Activated B cell treated with CpG ODN at 0.5 μM for 24 hours (primary cell): ENCODE measurements at regions of chr15 and their contacts with region 1.

Region 1: GRCh38 chr15:65184868-65185738 is at the start of gene CLPX:
- DNase-seq: peak; percentile 87
- ATAC-seq: peak; percentile 88
- H3K4me3 Mint-ChIP-seq: peak within 1 kb of the TSS; percentile 93
- H3K27ac Mint-ChIP-seq: peak within 1 kb of the TSS; percentile 89
- H3K4me1 Mint-ChIP-seq: peaks cover 26% of the 10 kb centered on the region
- H3K27me3 Mint-ChIP-seq: no peaks in the 10 kb centered on the region
- CTCF ChIP-seq: no peak
- total RNA-seq, gene CLPX: 52.2 and 53.5 TPM in 2 replicates

Region 2: DNA sequence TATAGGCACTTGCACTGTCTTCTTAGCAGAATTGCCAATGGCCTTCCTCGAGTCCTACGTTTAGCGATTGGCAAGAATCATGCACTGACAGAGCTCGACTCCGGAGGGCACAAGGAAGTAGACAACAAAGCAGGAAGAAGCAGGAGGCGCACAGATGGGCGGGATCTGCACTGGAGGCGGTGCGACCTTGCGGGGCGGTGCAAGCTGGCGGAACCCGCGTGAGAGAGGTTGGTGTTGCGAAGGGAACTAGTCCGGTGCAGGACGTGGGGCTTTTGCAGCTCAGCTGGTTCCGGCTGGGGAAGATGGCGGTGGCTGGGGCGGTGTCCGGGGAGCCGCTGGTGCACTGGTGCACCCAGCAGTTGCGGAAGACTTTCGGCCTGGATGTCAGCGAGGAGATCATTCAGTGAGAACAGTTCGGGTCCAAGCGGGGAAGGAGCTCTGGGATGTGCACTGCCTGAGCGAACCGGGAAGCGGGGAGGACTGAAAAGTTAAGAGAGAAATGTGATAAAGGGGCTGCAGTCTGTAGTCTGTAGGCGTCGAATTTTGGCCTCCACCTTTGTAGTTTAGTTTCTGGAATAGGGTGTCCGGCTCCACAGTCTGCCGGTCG is 797.4 kb before region 1 on chr15 and contains the start of gene TRIP4:
- CTCF ChIA-PET with region 1: no interaction called
- POLR2A ChIA-PET with region 1: interaction called, 8 read pairs
- intact Hi-C with region 1: loop called (anchors 1 kb)
- DNase-seq: peak; percentile 92
- ATAC-seq: peak; percentile 100
- H3K4me3 Mint-ChIP-seq: peak within 1 kb of the TSS; percentile 98
- H3K27ac Mint-ChIP-seq: peak within 1 kb of the TSS; percentile 94
- H3K4me1 Mint-ChIP-seq: peaks cover 25% of the 10 kb centered on the region
- H3K27me3 Mint-ChIP-seq: no peaks in the 10 kb centered on the region
- CTCF ChIP-seq: no peak
- total RNA-seq, gene TRIP4: 26.3 and 35.0 TPM in 2 replicates

Region 3: DNA sequence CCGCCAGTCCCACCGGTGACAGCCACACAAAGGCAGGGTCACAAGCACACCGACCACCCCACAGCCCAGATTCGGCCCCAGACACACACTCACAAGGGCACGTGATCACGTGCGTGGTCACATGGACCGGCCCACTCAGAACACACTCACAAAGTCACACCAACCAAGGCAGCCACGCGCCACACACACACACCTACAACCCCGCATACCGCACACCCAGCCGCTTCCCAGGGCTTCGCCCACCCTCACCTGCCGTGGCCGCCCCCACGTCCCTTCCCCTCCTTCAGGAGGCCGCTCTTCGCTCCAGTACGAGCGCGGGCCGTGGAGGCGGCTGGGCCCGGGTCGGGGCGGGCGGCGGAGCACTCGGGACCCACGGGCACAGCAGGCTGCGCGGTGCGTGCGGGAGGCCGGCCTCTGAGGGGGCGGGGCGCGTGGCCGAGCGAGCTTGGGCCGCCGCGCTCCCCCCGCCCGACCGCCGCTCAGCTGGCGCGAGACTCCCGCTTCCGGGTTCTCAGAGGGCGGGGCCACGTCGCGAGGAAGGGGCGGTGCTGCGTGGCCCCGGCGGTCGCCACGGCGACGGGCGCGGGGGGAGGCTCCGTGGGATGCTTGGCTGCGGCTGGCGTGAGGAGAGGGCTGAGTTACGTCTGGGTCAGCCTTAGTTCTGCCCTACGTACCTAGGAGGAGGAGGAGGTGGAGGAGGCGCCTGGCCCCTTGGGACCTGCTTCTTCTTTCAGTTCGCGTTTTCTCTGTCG is 195.5 kb before region 1 on chr15 and contains the start of gene SPG21:
- CTCF ChIA-PET with region 1: no interaction called
- POLR2A ChIA-PET with region 1: interaction called, 8 read pairs
- intact Hi-C with region 1: loop called (anchors 2 kb)
- DNase-seq: peak; percentile 97
- ATAC-seq: peak; percentile 95
- H3K4me3 Mint-ChIP-seq: peak within 1 kb of the TSS; percentile 91
- H3K27ac Mint-ChIP-seq: peak within 1 kb of the TSS; percentile 86
- H3K4me1 Mint-ChIP-seq: peaks cover 48% of the 10 kb centered on the region
- H3K27me3 Mint-ChIP-seq: no peaks in the 10 kb centered on the region
- CTCF ChIP-seq: no peak
- total RNA-seq, gene SPG21: 74.7 and 75.7 TPM in 2 replicates

Region 4: GRCh38 chr15:65133548-65134200 is 51.4 kb before region 1 on chr15 and contains the start of gene PDCD7:
- CTCF ChIA-PET with region 1: no interaction called
- POLR2A ChIA-PET with region 1: interaction called, 9 read pairs
- intact Hi-C with region 1: loop called (anchors 1 kb)
- DNase-seq: peak; percentile 70
- ATAC-seq: peak; percentile 95
- H3K4me3 Mint-ChIP-seq: peak within 1 kb of the TSS; percentile 89
- H3K27ac Mint-ChIP-seq: peak within 1 kb of the TSS; percentile 84
- H3K4me1 Mint-ChIP-seq: peaks cover 28% of the 10 kb centered on the region
- H3K27me3 Mint-ChIP-seq: no peaks in the 10 kb centered on the region
- CTCF ChIP-seq: no peak
- total RNA-seq, gene PDCD7: 29.3 and 30.7 TPM in 2 replicates

Region 5: DNA sequence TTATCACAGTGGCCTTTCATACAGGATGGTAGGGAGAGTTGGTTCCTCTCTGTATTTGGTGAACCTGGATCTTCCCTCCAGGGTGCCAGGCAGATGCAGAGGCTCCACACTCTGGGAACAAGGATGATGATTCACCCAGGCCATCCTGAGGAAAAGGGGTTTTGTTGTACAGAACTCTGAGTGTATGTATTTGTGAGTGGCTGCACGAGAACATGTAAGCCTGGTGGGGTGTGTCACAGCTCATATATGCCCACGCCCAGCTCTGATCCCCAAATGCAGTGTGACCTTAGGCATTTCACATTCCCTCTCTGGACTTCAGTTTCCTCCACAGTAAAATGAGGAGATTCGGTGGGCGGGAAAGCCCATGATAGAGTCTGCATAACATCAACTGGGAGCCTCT is 37.8 kb after region 1 on chr15:
- CTCF ChIA-PET with region 1: no interaction called
- POLR2A ChIA-PET with region 1: no interaction called
- intact Hi-C with region 1: no loop called
- DNase-seq: no peak
- ATAC-seq: no peak
- H3K4me3 Mint-ChIP-seq: no peak overlapping the region
- H3K27ac Mint-ChIP-seq: no peak overlapping the region
- H3K4me1 Mint-ChIP-seq: no peaks in the 10 kb centered on the region
- H3K27me3 Mint-ChIP-seq: peaks cover 3% of the 10 kb centered on the region
- CTCF ChIP-seq: no peak

Region 6: DNA sequence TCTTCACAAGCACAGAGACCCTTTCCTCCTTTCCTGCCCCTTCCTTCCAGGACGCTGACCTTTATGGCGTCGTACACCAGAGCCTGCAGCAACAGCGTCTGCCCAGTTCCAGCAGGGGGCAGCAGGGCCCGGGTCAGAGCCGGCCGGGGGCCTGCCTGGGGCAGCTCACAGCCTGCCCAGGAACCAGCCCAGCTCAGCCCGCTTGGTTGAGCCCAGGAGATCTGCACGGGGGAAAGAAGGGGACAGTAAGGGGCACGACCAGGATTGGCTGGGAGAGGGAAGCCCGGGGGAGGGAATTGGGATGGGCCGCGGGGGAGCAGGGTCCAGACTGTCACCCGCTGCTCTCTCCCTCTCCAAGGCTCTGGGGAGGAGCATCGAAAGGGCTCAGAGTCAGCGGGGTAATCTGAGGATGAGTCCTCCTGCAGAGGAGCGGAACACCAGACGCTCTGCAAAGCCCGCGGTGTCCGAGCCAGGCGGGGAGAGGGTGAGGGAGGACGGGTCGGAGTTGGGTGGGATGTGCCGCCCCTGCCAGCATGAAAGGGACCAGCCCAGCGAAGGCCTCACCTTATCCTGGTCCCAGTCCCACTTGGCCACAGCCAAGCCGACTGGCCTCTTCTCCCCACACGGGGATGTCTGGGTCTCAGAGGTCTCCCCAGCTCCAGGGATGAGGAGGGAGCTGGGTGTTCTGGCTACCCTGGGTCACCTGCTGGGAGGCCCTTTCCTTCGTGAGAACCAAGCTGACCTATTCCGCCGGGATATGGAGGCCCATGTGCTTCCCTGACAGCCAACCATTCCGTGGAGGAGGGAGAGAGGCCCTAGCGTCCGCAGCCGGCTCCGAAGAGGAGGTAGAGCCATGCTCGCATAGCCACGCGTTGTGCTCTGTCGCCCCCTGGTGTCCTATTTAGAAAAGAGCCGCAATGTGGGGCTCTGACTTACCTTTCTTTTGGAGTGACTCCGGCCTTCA is 200.1 kb after region 1 on chr15:
- CTCF ChIA-PET with region 1: interaction called, 3 read pairs
- POLR2A ChIA-PET with region 1: interaction called, 6 read pairs
- intact Hi-C with region 1: loop called (anchors 1 kb)
- DNase-seq: peak; percentile 68
- ATAC-seq: peak; percentile 84
- H3K4me3 Mint-ChIP-seq: peak overlapping the region; percentile 89
- H3K27ac Mint-ChIP-seq: no peak overlapping the region
- H3K4me1 Mint-ChIP-seq: peaks cover 10% of the 10 kb centered on the region
- H3K27me3 Mint-ChIP-seq: peaks cover 20% of the 10 kb centered on the region
- CTCF ChIP-seq: peak; percentile 12